Natural killer cell (primary cell): ENCODE measurements at regions of chr3 and their contacts with region 1.

Region 1: DNA sequence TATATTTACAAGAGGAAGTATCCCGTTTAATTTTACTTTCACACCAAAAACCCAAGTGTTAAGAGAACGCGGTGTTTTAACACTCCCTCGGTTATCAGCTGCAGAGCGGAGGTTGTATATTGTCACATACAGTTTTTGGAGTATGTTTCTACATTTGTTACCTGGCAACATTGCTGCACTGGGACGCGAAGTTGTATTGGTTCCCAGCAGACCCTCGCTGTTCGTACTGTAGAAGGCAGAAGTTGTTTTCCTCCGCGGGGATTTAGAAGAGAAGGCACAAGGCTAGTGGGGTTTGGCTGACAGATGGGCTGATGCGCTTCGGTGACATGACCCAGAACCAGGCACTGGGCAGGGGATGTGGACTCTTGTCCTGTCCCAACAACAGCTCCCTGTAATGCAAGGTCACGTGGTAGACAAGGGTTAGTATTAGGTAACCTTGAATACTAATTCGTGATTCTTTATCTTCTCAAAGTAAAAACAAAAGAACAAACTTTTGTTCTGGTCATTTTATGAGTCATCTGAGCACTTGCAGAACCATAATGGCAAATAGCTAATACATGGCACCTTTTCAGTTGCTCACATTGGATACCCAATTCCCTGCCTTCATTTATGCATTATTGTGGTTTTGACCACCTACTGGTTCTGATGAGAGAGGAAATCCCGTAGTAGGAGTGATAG is 230.4 kb upstream of the BHLHE40 start:
- DNase-seq: peak; percentile 33 to 60
- ATAC-seq: peak; percentile 74 to 84 (median 80)
- H3K4me3 ChIP-seq: peak overlapping the region; percentile 7
- H3K4me3 Mint-ChIP-seq: peak overlapping the region; percentile 85
- H3K27ac ChIP-seq: peak overlapping the region; percentile 84
- H3K27ac Mint-ChIP-seq: peak overlapping the region; percentile 92 to 97
- H3K4me1 ChIP-seq: peaks cover 58% of the 10 kb centered on the region
- H3K4me1 Mint-ChIP-seq: peaks cover 84 to 85% of the 10 kb centered on the region in 2 donors
- H3K27me3 ChIP-seq: no peaks in the 10 kb centered on the region
- H3K27me3 Mint-ChIP-seq: no peaks in the 10 kb centered on the region
- CTCF ChIP-seq: no peak

Region 2: DNA sequence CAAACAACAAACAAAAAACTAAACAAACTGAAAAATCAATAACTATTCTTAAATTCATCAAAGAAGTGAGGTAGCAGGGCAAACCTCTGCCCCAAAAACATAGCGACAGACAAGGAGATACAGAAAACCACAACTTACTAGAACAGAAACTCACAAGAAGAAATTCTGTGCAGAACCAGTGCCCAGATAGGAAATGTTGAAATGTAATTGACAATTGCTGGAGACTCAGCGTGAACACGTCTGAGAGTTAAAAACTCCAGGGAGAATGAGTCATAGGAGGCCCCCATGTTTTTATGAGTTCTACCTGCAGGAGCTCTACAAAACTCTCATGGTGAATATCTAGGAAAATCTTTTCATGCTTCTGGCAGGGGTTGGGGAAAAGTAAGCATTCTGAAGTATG is 541.2 kb before region 1 on chr3:
- intact Hi-C with region 1: no loop called
- DNase-seq: no peak
- ATAC-seq: no peak
- H3K4me3 ChIP-seq: no peak overlapping the region
- H3K4me3 Mint-ChIP-seq: no peak overlapping the region
- H3K27ac ChIP-seq: no peak overlapping the region
- H3K27ac Mint-ChIP-seq: no peak overlapping the region
- H3K4me1 ChIP-seq: no peaks in the 10 kb centered on the region
- H3K4me1 Mint-ChIP-seq: no peaks in the 10 kb centered on the region
- H3K27me3 ChIP-seq: no peaks in the 10 kb centered on the region
- H3K27me3 Mint-ChIP-seq: peaks cover 0 to 5% of the 10 kb centered on the region in 2 donors
- CTCF ChIP-seq: no peak

Region 3: GRCh38 chr3:4394048-4394447 is 354.8 kb before region 1 on chr3:
- intact Hi-C with region 1: loop called (anchors 5 kb)
- DNase-seq: peak; percentile 38 to 40
- ATAC-seq: peak; percentile 77 to 86 (median 78)
- H3K4me3 ChIP-seq: no peak overlapping the region
- H3K4me3 Mint-ChIP-seq: peak overlapping the region; percentile 68
- H3K27ac ChIP-seq: peak overlapping the region; percentile 71
- H3K27ac Mint-ChIP-seq: peak overlapping the region; percentile 85 to 87
- H3K4me1 ChIP-seq: peaks cover 23% of the 10 kb centered on the region
- H3K4me1 Mint-ChIP-seq: peaks cover 41 to 45% of the 10 kb centered on the region in 2 donors
- H3K27me3 ChIP-seq: no peaks in the 10 kb centered on the region
- H3K27me3 Mint-ChIP-seq: no peaks in the 10 kb centered on the region
- CTCF ChIP-seq: no peak

Region 4: GRCh38 chr3:4722103-4722502 is 26.7 kb before region 1 on chr3:
- intact Hi-C with region 1: loop called (anchors 1 kb)
- DNase-seq: peak in 1 of 2 donors; percentile 55
- ATAC-seq: peak; percentile 76 to 95 (median 91)
- H3K4me3 ChIP-seq: no peak overlapping the region
- H3K4me3 Mint-ChIP-seq: no peak overlapping the region
- H3K27ac ChIP-seq: no peak overlapping the region
- H3K27ac Mint-ChIP-seq: peak overlapping the region; percentile 20 to 34
- H3K4me1 ChIP-seq: peaks cover 6% of the 10 kb centered on the region
- H3K4me1 Mint-ChIP-seq: peaks cover 19 to 28% of the 10 kb centered on the region in 2 donors
- H3K27me3 ChIP-seq: no peaks in the 10 kb centered on the region
- H3K27me3 Mint-ChIP-seq: no peaks in the 10 kb centered on the region
- CTCF ChIP-seq: peak; percentile 53

Region 5: DNA sequence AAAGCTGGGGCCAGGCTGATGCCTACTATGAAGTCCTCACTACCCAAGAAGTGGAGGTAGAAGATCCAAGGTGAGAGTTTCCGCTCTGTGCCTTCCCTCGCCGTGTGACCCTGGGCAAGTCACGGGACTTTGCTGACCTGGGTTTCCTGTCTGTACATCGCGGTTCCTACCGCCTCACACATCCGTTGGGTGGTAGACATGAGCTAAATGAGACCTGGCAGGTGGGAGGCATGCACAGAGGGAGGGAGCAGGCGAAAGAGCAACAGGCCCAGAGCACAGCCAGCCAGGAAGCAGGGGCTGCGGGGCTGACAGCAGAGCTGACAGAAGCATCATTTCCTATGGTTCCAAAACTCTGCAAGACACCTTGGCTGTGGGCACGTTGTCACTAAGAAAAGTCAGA is 73.1 kb after region 1 on chr3:
- intact Hi-C with region 1: loop called (anchors 2 kb)
- DNase-seq: peak; percentile 71 to 95
- ATAC-seq: peak; percentile 88 to 97 (median 93)
- H3K4me3 ChIP-seq: no peak overlapping the region
- H3K4me3 Mint-ChIP-seq: peak overlapping the region; percentile 76
- H3K27ac ChIP-seq: peak overlapping the region; percentile 58
- H3K27ac Mint-ChIP-seq: peak overlapping the region; percentile 59 to 97
- H3K4me1 ChIP-seq: peaks cover 47% of the 10 kb centered on the region
- H3K4me1 Mint-ChIP-seq: peaks cover 51 to 69% of the 10 kb centered on the region in 2 donors
- H3K27me3 ChIP-seq: no peaks in the 10 kb centered on the region
- H3K27me3 Mint-ChIP-seq: no peaks in the 10 kb centered on the region
- CTCF ChIP-seq: no peak

Region 6: DNA sequence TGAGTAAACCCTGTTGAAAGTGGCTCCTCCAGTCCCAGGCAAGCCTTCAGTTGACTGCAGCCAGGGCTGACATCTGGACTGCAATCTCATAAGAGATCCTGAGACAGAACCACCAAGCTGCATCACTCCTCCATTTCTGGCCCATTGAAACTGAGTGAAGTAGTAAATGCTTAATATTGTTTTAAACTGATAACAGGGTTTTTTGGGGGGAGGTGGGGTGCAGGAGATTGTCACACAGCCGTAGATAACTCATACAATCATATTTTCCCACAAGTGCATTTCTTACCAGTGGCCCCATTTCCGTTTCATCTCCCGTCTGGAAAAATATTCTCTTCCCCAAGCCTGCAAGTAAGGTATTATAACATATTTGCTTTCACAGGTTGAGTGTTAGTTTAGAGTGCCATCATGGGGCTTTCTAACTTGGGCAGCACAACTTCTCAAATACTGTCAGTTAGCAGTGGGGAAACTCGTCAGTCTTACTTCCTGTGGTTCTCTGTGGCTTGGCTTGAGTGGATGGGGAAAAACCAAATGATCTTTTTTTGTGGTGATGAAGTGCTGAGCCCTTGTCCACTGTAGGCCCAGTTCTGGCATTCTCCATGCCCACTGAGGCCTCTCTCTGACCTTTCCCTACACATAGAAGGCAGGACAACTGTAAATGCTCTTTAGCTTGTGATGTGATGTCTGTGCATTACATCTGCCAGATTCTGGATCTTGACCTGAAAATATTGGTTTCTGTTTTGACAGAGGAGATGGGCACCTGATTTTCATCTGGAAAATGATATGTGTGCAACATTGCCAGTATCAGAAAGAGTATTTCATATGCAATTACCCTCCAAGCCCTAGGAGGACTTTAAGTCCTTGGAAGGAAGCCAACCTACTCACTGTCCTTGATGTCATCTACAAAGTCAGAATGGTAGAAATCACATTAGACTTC is 140.3 kb after region 1 on chr3:
- intact Hi-C with region 1: loop called (anchors 1 kb)
- DNase-seq: peak; percentile 44 to 77
- ATAC-seq: peak; percentile 88 to 98 (median 94)
- H3K4me3 ChIP-seq: no peak overlapping the region
- H3K4me3 Mint-ChIP-seq: peak overlapping the region; percentile 36
- H3K27ac ChIP-seq: peak overlapping the region; percentile 60
- H3K27ac Mint-ChIP-seq: peak overlapping the region; percentile 85 to 87
- H3K4me1 ChIP-seq: peaks cover 18% of the 10 kb centered on the region
- H3K4me1 Mint-ChIP-seq: peaks cover 16 to 17% of the 10 kb centered on the region in 2 donors
- H3K27me3 ChIP-seq: no peaks in the 10 kb centered on the region
- H3K27me3 Mint-ChIP-seq: no peaks in the 10 kb centered on the region
- CTCF ChIP-seq: no peak

Region 7: DNA sequence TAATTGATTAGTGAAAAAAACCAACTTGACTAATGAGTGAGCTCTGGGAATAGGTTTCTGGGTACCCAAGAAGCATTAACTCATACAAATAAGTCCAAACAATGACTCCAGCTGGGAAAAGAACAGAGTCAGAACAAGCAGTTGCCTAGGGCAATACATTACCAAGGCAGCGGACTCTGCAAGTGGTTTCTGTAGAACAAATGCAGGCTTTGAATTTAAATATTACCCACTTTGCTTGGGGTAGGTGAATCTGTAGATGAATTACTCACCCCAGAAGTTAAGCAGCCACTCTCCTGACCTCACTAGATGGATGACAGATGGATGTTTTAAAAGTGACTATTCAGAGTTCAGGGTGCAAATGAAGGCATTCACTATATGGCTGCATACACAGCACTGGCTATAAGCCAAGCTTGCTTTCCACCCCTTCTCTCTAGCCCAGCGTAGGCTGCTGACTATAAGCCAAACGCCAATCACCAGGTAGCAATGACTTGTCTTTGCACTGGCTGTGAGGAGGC is 157.3 kb after region 1 on chr3:
- intact Hi-C with region 1: loop called (anchors 5 kb)
- DNase-seq: no peak
- ATAC-seq: peak in 1 of 3 donors; percentile 27
- H3K4me3 ChIP-seq: no peak overlapping the region
- H3K4me3 Mint-ChIP-seq: peak overlapping the region; percentile 85
- H3K27ac ChIP-seq: no peak overlapping the region
- H3K27ac Mint-ChIP-seq: peak overlapping the region; percentile 90 to 95
- H3K4me1 ChIP-seq: peaks cover 35% of the 10 kb centered on the region
- H3K4me1 Mint-ChIP-seq: peaks cover 52 to 65% of the 10 kb centered on the region in 2 donors
- H3K27me3 ChIP-seq: no peaks in the 10 kb centered on the region
- H3K27me3 Mint-ChIP-seq: no peaks in the 10 kb centered on the region
- CTCF ChIP-seq: no peak

Region 8: DNA sequence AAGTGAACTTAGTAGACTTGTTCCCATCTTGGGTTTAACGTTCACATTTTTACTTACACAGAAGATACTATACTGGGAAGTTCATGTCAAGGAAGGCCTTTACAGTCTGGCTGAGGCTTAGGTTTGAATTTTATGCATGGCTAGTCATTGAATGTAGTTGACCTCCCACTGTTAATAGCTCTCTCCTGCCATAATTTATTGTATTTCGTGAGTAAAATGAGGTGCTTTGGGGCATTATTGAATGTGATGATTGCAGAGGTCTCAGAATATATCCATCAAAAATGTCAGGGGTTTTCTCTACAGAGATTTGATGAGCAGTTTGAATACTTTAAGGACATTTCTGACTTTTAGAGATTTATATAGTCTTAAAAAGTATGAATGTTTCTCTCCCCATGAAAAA is 1755.5 kb after region 1 on chr3:
- intact Hi-C with region 1: no loop called
- DNase-seq: no peak
- ATAC-seq: no peak
- H3K4me3 ChIP-seq: no peak overlapping the region
- H3K4me3 Mint-ChIP-seq: no peak overlapping the region
- H3K27ac ChIP-seq: no peak overlapping the region
- H3K27ac Mint-ChIP-seq: no peak overlapping the region
- H3K4me1 ChIP-seq: no peaks in the 10 kb centered on the region
- H3K4me1 Mint-ChIP-seq: no peaks in the 10 kb centered on the region
- H3K27me3 ChIP-seq: no peaks in the 10 kb centered on the region
- H3K27me3 Mint-ChIP-seq: no peaks in the 10 kb centered on the region
- CTCF ChIP-seq: no peak